ENCODE measurements at regions of chr11 and their contacts with region 1.

Region 1: DNA sequence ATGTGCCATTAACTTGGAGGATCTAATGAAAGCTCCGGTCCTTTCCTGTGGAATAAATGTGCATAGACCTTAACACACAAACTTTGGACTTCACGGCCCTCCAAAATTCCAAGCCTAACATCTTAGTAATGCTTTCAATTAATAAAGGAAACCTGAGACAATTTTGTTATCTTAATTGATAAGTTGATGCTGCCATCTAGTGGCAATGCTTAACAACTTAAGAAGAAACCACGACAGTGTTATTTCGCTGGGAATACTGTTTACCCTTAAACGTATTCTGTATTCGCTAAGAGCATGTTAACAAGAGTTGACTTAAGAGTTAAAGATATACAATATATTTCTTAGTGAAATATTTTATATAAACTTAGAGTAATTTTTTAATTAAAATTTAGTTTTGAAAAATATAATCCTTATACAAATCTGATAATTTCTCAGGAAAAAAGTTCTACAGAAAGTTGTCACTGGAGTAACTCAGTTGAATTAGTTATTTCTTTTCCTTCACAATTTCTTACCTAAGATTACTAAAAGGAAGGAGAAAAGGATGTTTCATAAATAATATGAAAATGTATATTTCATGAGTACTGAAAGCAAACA is 35.0 kb upstream of the OR9G4 start:
- DNase-seq: peak; percentile 17
- H3K4me3 ChIP-seq: no peak overlapping the region
- H3K27ac ChIP-seq: no peak overlapping the region
- H3K4me1 ChIP-seq: no peaks in the 10 kb centered on the region
- H3K27me3 ChIP-seq: no peaks in the 10 kb centered on the region
- CTCF ChIP-seq: peak; percentile 64

Region 2: GRCh38 chr11:55942785-55943392 is 840.7 kb before region 1 on chr11:
- intact Hi-C with region 1: loop called (anchors 5 kb)
- DNase-seq: no peak
- H3K4me3 ChIP-seq: no peak overlapping the region
- H3K27ac ChIP-seq: no peak overlapping the region
- H3K4me1 ChIP-seq: no peaks in the 10 kb centered on the region
- H3K27me3 ChIP-seq: no peaks in the 10 kb centered on the region
- CTCF ChIP-seq: peak; percentile 39

Region 3: GRCh38 chr11:56522008-56522407 is 261.5 kb before region 1 on chr11:
- intact Hi-C with region 1: loop called (anchors 5 kb)
- DNase-seq: no peak
- H3K4me3 ChIP-seq: no peak overlapping the region
- H3K27ac ChIP-seq: no peak overlapping the region
- H3K4me1 ChIP-seq: no peaks in the 10 kb centered on the region
- H3K27me3 ChIP-seq: no peaks in the 10 kb centered on the region
- CTCF ChIP-seq: peak; percentile 14

Region 4: GRCh38 chr11:56670984-56671383 is 112.6 kb before region 1 on chr11:
- intact Hi-C with region 1: no loop called
- DNase-seq: no peak
- H3K4me3 ChIP-seq: no peak overlapping the region
- H3K27ac ChIP-seq: no peak overlapping the region
- H3K4me1 ChIP-seq: no peaks in the 10 kb centered on the region
- H3K27me3 ChIP-seq: no peaks in the 10 kb centered on the region
- CTCF ChIP-seq: no peak

Measured in colonic mucosa (tissue), 4 donors.